ENCODE measurements at regions of chr2 and their contacts with region 1.

Region 1: GRCh38 chr2:84495539-84496146 is 20.7 kb upstream of the DNAH6 start:
- DNase-seq: peak; percentile 36
- H3K4me3 ChIP-seq: no peak overlapping the region
- H3K27ac ChIP-seq: no peak overlapping the region
- H3K4me1 ChIP-seq: no peaks in the 10 kb centered on the region
- H3K27me3 ChIP-seq: no peaks in the 10 kb centered on the region
- CTCF ChIP-seq: peak; percentile 19 to 78 (median 70)
- POLR2A ChIP-seq: no peak

Region 2: GRCh38 chr2:84603911-84604310 is 108.3 kb after region 1 on chr2:
- intact Hi-C with region 1: no loop called
- DNase-seq: no peak
- H3K4me3 ChIP-seq: no peak overlapping the region
- H3K27ac ChIP-seq: no peak overlapping the region
- H3K4me1 ChIP-seq: no peaks in the 10 kb centered on the region
- H3K27me3 ChIP-seq: no peaks in the 10 kb centered on the region
- CTCF ChIP-seq: no peak
- POLR2A ChIP-seq: no peak

Region 3: GRCh38 chr2:84631047-84631446 is 135.4 kb after region 1 on chr2:
- intact Hi-C with region 1: loop called (anchors 5 kb)
- DNase-seq: no peak
- H3K4me3 ChIP-seq: no peak overlapping the region
- H3K27ac ChIP-seq: no peak overlapping the region
- H3K4me1 ChIP-seq: no peaks in the 10 kb centered on the region
- H3K27me3 ChIP-seq: no peaks in the 10 kb centered on the region
- CTCF ChIP-seq: peak in 3 of 4 experiments; percentile 32 to 57 (median 51)
- POLR2A ChIP-seq: no peak

Region 4: GRCh38 chr2:84881581-84882414 is 386.2 kb after region 1 on chr2:
- intact Hi-C with region 1: loop called (anchors 5 kb)
- DNase-seq: peak; percentile 65
- H3K4me3 ChIP-seq: peak overlapping the region; percentile 15 to 34
- H3K27ac ChIP-seq: no peak overlapping the region
- H3K4me1 ChIP-seq: peaks cover 8% of the 10 kb centered on the region
- H3K27me3 ChIP-seq: peaks cover 14% of the 10 kb centered on the region
- CTCF ChIP-seq: peak; percentile 46 to 65 (median 59)
- POLR2A ChIP-seq: no peak

Region 5: DNA sequence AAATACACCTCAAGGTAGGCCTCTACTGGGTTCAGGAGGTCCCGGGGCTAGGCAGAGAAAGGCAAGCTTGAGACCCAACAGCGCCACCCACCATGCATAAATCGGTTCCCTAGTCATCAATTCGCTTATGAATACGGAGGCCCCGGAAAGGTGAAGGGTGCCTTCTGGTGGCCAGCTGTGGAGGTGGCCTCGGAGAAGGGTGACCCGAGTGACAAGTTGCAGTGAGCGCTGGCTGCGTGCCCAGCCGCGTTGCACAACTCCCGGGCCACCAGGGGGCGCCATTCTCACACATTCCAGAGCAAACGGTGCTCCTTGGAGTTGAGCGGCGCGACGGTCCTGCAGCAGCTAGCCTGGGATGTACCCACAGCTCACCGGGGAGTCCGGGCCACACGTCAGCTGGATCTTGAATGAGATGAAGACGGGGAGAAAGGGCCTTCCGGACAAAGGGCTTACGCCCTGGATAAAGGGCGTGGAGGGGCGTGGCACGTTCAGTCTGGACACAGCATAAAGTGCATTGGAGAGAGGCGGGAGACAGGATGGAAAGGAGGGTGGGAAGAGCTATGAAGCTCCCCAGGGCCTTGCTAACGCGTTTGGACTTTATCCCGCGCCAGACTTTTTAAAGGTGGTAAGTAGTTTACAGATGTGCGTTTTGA is 430.2 kb after region 1 on chr2:
- intact Hi-C with region 1: loop called (anchors 5 kb)
- DNase-seq: peak; percentile 93
- H3K4me3 ChIP-seq: no peak overlapping the region
- H3K27ac ChIP-seq: no peak overlapping the region
- H3K4me1 ChIP-seq: peaks cover 4% of the 10 kb centered on the region
- H3K27me3 ChIP-seq: no peaks in the 10 kb centered on the region
- CTCF ChIP-seq: peak; percentile 85 to 98 (median 94)
- POLR2A ChIP-seq: peak; percentile 20

Measured in prostate gland (tissue), 2 donors.